Ovary (tissue), 10 donors: ENCODE measurements at regions of chr13 and their contacts with region 1.

Region 1: DNA sequence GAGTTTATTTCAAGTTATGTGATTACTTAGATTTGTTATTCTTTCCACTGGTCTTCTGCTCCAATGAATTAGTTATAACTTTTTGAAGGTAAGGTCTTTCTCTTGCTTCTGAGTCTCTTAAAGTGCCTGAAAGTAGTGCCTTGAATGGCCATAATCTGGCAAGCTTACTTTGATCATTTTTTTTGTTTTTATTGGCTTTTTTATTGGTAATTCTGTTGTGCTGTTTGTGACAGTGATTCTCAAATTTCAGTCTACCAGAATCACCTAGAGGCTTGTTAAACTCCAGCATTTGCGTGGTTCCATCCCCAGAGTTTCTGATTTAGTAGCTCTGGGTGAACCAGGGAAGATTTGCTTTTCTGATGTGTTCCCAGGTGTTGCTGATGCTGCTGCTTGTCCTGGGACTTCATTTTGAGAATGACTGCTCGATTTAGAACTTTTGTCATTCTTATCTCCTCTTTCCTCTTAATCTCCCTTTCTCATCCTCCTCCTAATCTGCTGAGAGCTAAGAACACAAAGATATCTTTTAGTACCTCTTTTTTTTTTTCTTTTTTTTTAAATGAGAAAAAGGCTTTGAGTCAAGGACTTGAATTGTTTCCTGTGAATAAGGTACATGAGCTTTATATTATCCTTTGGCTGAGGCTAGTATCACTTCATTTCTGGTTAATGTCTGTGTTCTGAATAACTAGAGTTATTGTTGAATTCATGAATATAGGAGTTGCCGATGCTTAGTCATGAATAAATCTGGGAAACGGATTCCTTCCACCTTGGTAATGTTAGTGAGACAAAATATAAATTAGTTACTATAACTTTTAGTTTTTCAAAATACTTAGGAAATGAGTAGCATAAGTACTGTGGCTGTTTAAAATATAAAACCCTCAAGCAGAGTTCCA is 91.4 kb downstream of the PAN3 start:
- DNase-seq: no peak
- H3K4me3 ChIP-seq: no peak overlapping the region
- H3K27ac ChIP-seq: no peak overlapping the region
- H3K4me1 ChIP-seq: peaks cover 1% of the 10 kb centered on the region
- H3K27me3 ChIP-seq: no peaks in the 10 kb centered on the region
- CTCF ChIP-seq: no peak
- EP300 ChIP-seq: no peak
- POLR2A ChIP-seq: no peak

Region 2: GRCh38 chr13:27406178-27406939 is 823.4 kb before region 1 on chr13:
- intact Hi-C with region 1: loop called in 1 of 4 experiments (anchors 5 kb)
- DNase-seq: no peak
- H3K4me3 ChIP-seq: no peak overlapping the region
- H3K27ac ChIP-seq: no peak overlapping the region
- H3K4me1 ChIP-seq: peaks cover 9% of the 10 kb centered on the region
- H3K27me3 ChIP-seq: no peaks in the 10 kb centered on the region
- CTCF ChIP-seq: peak in 1 of 3 donors; percentile 27
- EP300 ChIP-seq: no peak
- POLR2A ChIP-seq: no peak